Left cardiac atrium (tissue), 4 donors: ENCODE measurements at regions of chr17 and their contacts with region 1.

Region 1: DNA sequence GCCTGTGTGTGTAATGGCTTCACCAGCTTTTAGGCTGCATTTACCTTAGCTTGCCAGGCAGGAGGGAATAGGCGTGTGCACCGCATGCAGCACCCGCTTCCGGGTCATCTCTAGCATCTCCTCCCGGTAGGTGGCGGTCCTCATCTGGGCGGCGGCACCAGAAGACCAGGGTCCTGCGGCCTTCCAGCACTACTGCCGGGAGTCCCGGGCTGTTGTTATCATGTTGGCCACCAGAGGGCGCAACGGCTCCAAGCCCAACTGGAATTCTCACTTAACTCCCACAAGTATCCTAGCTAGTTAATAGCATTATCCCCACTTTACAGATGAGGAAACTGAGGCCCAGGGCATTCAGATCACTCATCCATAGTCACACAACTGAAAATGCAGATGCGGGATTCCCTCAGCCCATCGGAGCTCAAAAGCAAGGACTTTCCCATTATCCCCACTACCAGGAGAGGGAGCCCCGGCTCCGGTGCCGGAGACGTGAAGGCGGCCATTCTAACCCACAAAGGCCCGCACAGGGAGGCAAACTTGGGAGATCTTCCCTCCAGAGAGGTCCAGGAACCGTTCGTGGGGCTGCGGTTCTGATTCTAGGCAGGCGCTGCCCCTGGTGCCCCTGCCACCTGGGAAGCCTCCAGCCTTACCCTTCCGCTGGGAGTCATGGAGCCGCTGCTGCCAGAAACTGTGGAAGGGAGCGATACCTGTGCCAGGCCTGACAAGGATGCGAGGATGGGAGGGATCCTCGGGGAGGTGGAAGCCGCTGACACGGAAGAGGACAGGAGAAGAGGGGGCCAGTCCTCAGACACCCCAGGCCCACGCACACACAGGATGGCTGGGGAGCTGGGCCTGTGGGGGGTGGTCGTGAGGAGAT is 23.9 kb downstream of the LGALS9 start:
- DNase-seq: peak; percentile 67
- ATAC-seq: peak in 1 of 2 donors; percentile 31

Region 2: GRCh38 chr17:27226615-27227230 is 428.2 kb before region 1 on chr17:
- intact Hi-C with region 1: loop called in 1 of 2 experiments (anchors 10 kb)
- DNase-seq: no peak
- ATAC-seq: no peak

Region 3: DNA sequence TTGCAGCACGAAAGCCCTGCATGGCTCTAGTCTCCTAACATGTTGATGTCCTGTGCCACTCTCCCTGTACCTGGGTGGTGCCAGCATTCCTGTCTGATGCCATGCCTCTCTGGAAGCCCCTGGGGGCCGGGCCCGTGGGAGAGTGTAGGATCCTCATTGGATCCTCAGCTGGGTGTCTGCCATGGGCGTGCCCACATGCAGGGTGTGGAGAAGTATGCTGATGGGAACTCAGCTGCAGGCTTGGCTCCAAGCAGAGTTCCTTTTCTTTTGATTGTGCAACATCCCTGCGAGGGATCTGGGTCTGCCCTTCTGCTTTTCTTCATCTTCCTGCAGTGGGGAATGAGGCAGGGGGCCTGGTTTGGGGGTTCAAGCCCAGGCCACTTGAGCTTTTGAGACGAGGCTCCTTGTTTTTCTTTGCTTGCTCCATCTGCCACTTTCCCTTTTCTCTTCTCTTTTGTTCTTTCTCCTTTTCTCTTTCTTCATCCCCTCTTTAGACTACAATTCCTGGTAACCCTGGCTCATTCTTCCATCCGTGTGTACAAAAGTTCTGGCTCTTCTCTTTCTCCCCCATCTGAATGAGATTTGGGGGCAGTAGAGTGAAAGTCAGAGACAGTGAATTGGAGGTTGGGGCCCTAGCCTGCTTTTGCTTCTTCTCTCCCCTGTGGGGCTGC is 165.7 kb before region 1 on chr17:
- intact Hi-C with region 1: no loop called
- DNase-seq: peak; percentile 94
- ATAC-seq: peak; percentile 80 to 92

Region 4: DNA sequence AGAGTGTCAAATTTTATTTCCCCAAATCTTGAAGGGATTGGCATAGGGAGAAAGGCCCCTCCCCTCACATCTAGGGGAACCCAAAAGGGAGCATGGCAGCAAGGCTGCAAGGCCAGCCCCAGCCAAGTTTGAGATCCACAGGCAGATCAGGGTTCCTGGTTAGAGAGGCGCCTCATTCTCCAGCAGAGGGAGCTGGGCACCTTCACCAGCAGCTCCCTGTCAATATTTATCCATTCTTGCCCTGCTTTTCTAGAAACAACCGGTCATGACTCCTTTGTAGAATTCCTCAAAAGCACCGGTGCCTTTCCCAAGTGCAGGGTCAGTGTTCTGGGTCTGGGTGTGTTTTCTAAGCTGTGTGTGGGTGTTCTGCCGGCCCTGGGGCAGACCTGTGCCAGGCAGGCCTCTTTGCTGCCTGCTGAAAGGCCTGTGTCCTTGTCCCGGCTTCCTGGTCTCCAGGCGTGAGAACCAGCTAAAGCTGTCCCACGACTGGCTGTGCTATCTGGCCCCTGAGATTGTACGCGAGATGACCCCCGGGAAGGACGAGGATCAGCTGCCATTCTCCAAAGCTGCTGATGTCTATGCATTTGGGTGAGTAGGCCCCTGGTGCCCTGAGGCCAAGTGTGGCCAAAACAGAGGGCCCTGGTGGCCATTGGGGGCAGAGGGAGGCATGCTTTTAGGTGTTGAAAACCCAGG is 45.1 kb before region 1 on chr17:
- intact Hi-C with region 1: loop called (anchors 1 to 2 kb)
- DNase-seq: no peak
- ATAC-seq: peak; percentile 30 to 68

Region 5: DNA sequence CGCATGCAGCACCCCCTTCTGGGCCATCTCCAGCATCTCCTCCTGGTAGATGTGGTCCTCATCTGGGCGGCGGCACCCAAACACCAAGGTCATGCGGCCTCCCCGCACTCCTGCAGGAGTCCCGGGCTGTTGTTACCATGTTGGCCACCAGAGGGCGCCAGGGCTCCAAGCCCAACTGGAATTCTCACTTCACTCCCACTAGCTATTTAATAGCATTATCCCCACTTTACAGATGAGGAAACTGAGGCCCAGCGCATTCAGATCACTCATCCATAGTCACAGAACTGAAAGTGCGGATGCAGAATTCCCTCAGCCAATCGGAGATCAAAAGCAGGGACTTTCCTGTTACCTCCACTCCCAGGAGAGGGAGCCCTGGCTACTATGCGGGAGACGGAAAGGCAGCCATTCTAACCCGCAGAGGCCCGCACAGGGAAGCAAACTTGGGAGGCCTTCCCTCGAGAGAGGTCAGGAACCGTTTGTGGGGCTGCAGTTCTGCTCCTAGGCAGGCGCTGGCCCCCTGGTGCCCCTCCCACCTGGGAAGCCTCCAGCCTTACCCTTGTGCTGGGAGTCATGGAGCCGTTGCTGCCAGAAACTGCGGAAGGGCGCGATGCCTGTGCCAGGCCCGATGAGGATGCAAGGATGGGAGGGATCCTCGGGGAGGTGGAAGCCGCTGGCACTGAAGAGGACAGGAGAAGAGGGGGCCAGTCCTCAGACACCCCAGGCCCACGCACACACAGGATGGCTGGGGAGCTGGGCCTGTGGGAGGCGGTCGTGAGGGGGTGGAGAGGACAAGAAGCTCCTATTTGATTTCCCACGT is 105.4 kb after region 1 on chr17:
- intact Hi-C with region 1: loop called (anchors 2 kb)
- DNase-seq: peak; percentile 69
- ATAC-seq: peak; percentile 50 to 53

Region 6: GRCh38 chr17:27879987-27880608 is 225.2 kb after region 1 on chr17:
- intact Hi-C with region 1: loop called in 1 of 2 experiments (anchors 5 kb)
- DNase-seq: peak; percentile 69
- ATAC-seq: peak; percentile 95